ENCODE measurements at regions of chr7 and their contacts with region 1.

Region 1: GRCh38 chr7:138097064-138097741 is 20.9 kb downstream of the AKR1D1 start:
- DNase-seq: peak; percentile 79
- ATAC-seq: peak; percentile 99
- H3K4me3 ChIP-seq: no peak overlapping the region
- H3K27ac ChIP-seq: peak overlapping the region; percentile 51
- H3K4me1 ChIP-seq: peaks cover 44% of the 10 kb centered on the region
- H3K27me3 ChIP-seq: no peaks in the 10 kb centered on the region
- CTCF ChIP-seq: peak; percentile 76
- EP300 ChIP-seq: peak in 1 of 2 experiments; percentile 34; a peak in 1 of 4 replicates
- POLR2A ChIP-seq: no peak
- RAD21 ChIP-seq: peak; percentile 60

Region 2: DNA sequence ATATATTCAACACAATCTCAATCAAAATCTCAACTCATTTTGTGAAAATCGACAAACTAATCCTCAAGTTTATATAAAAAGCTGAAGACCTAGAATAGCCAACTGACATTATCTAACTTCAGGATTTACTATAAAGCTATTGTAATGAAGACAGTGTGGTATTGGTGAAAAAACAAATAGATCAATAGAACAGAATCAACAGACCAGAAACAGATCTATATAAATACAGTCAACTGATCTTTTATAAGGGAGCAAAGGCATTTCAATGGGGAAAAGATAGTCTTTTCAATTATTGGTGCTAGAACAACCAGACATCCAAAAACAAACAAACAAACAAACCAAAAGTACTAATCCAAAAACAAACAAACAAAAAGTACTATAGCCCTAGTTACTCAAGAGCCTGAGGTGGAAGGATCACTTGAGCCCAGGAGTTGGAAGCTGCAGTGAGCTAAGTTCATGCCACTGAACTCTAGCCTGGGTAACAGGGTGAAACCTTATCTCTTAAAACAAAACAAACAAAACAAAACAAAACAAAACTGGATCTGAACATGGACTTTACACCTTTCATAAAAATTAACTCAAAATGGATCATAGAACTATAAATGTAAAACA is 47.6 kb before region 1 on chr7:
- CTCF ChIA-PET with region 1: no interaction called
- POLR2A ChIA-PET with region 1: no interaction called
- in situ Hi-C with region 1: no loop called
- intact Hi-C with region 1: no loop called
- DNase-seq: peak; percentile 83
- ATAC-seq: peak; percentile 94
- H3K4me3 ChIP-seq: peak overlapping the region in 1 of 3 experiments; percentile 15; a peak in 2 of 6 replicates
- H3K27ac ChIP-seq: peak overlapping the region; percentile 81
- H3K4me1 ChIP-seq: peaks cover 48% of the 10 kb centered on the region
- H3K27me3 ChIP-seq: no peaks in the 10 kb centered on the region
- CTCF ChIP-seq: no peak
- EP300 ChIP-seq: peak in 1 of 2 experiments; percentile 80; a peak in 3 of 4 replicates
- POLR2A ChIP-seq: no peak
- RAD21 ChIP-seq: no peak

Region 3: DNA sequence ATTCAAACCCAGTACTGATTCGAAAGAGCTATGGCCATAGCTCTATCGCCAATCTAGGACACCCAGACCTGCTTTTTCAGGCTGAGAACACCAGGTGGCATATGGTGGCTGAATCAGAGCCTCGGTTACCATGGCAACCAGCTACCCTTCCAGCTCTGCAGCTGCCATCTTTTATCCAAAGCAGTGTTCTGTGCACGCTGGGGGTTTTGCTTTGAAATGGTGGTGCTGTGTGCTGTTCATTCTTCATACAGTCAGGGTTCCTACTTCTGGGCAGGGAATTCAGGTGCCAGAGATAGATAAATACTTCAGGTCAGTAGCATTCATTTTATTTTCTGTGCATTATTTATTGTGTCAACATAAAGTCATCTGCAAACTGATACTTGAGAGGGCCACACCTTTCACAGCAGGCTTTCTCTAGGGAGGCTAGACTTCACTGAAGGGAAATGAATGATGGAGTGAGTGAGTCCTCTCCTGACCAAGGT is 64.4 kb after region 1 on chr7:
- CTCF ChIA-PET with region 1: no interaction called
- POLR2A ChIA-PET with region 1: no interaction called
- in situ Hi-C with region 1: no loop called
- intact Hi-C with region 1: loop called (anchors 2 kb)
- DNase-seq: peak; percentile 95
- ATAC-seq: peak; percentile 88
- H3K4me3 ChIP-seq: no peak overlapping the region; a peak in 1 of 6 replicates
- H3K27ac ChIP-seq: peak overlapping the region; percentile 21
- H3K4me1 ChIP-seq: peaks cover 59% of the 10 kb centered on the region
- H3K27me3 ChIP-seq: no peaks in the 10 kb centered on the region
- CTCF ChIP-seq: peak; percentile 94
- EP300 ChIP-seq: peak in 1 of 2 experiments; percentile 55; a peak in 2 of 4 replicates
- POLR2A ChIP-seq: no peak
- RAD21 ChIP-seq: peak; percentile 92

Region 4: GRCh38 chr7:138478499-138478908 is 381.3 kb after region 1 on chr7:
- CTCF ChIA-PET with region 1: no interaction called
- POLR2A ChIA-PET with region 1: no interaction called
- in situ Hi-C with region 1: no loop called
- intact Hi-C with region 1: loop called (anchors 10 kb)
- DNase-seq: no peak
- ATAC-seq: no peak; the same call in 2 of the 3 replicates
- H3K4me3 ChIP-seq: no peak overlapping the region
- H3K27ac ChIP-seq: peak overlapping the region; percentile 64
- H3K4me1 ChIP-seq: peaks cover 99% of the 10 kb centered on the region
- H3K27me3 ChIP-seq: no peaks in the 10 kb centered on the region
- CTCF ChIP-seq: no peak
- EP300 ChIP-seq: no peak
- POLR2A ChIP-seq: no peak
- RAD21 ChIP-seq: no peak

Measured in HepG2 (cell line).